Activated T-helper 2 cell treated with anti-CD3 and anti-CD28 coated beads, Interferon-gamma antibody, Interleukin-2, Interleukin-4, amounts not matched to agents 10 μg/mL and 5 μg/mL and 100 μg/mL, durations not matched to agents 14 hours and 24 hours and 36 hours (primary cell): ENCODE measurements at regions of chr9 and their contacts with region 1.

Region 1: GRCh38 chr9:112218908-112219307 is 43.8 kb upstream of the SUSD1 start:
- DNase-seq: peak; percentile 13
- H3K4me3 Mint-ChIP-seq: no peak overlapping the region
- H3K27ac Mint-ChIP-seq: peak overlapping the region; percentile 80
- H3K4me1 Mint-ChIP-seq: peaks cover 35% of the 10 kb centered on the region
- H3K27me3 Mint-ChIP-seq: no peaks in the 10 kb centered on the region

Region 2: DNA sequence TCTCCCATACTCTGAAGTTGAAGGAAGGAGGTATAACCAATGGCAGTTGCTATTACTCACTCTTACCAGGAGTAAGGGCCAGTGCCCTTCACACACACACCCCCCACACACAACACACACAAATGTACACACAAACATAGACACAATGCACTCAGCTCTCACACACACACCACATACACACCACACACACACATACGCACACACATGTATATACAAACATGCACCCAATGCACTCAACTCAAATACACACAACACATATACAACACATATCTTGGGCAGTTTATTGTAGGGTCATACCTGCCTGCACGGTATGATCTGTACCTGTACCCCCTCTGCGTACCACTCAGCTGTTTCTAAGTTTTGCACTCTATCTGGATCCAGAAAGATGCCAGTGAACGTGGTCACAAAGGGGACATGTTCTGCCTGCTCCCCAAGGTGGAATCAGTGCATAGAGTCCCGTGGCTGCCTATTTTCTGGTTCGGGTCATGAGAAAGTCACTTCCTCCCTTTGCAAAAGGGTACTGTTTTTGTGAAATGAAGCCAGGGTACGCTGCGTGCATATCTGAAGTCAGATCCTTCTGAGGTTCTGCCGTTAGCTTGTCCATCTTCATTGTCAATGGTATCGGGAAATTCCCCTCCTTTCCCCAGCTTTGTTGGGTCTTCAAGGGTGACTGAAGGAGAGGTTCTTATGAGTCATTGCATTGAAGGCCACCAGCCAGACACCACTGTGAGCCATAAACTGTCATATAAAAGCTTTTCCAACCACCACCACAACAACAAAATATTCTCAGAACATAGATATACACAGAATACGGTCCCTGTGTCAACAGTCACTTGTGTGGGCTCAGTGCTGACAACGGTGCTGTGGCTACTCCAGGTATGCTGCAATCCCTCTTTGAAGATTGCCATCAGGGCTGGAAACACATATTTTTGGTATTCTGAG is 190.4 kb before region 1 on chr9:
- intact Hi-C with region 1: loop called (anchors 5 kb)
- DNase-seq: no peak
- H3K4me3 Mint-ChIP-seq: no peak overlapping the region
- H3K27ac Mint-ChIP-seq: no peak overlapping the region
- H3K4me1 Mint-ChIP-seq: peaks cover 29% of the 10 kb centered on the region
- H3K27me3 Mint-ChIP-seq: peaks cover 7% of the 10 kb centered on the region

Region 3: GRCh38 chr9:112097712-112098688 is 120.9 kb before region 1 on chr9:
- intact Hi-C with region 1: loop called (anchors 1 kb)
- DNase-seq: peak; percentile 59
- H3K4me3 Mint-ChIP-seq: no peak overlapping the region
- H3K27ac Mint-ChIP-seq: no peak overlapping the region
- H3K4me1 Mint-ChIP-seq: peaks cover 27% of the 10 kb centered on the region
- H3K27me3 Mint-ChIP-seq: no peaks in the 10 kb centered on the region

Region 4: GRCh38 chr9:112180387-112180881 is 38.5 kb before region 1 on chr9:
- intact Hi-C with region 1: loop called (anchors 2 kb)
- DNase-seq: peak; percentile 55
- H3K4me3 Mint-ChIP-seq: peak overlapping the region; percentile 11
- H3K27ac Mint-ChIP-seq: peak overlapping the region; percentile 61
- H3K4me1 Mint-ChIP-seq: peaks cover 50% of the 10 kb centered on the region
- H3K27me3 Mint-ChIP-seq: peaks cover 2% of the 10 kb centered on the region

Region 5: GRCh38 chr9:112249277-112249676 is 30.4 kb after region 1 on chr9:
- intact Hi-C with region 1: loop called (anchors 2 kb)
- DNase-seq: no peak
- H3K4me3 Mint-ChIP-seq: no peak overlapping the region
- H3K27ac Mint-ChIP-seq: peak overlapping the region; percentile 34
- H3K4me1 Mint-ChIP-seq: peaks cover 26% of the 10 kb centered on the region
- H3K27me3 Mint-ChIP-seq: no peaks in the 10 kb centered on the region

Region 6: GRCh38 chr9:112315331-112316257 is 96.7 kb after region 1 on chr9:
- intact Hi-C with region 1: loop called (anchors 5 kb)
- DNase-seq: no peak
- H3K4me3 Mint-ChIP-seq: peak overlapping the region; percentile 23
- H3K27ac Mint-ChIP-seq: peak overlapping the region; percentile 81
- H3K4me1 Mint-ChIP-seq: peaks cover 51% of the 10 kb centered on the region
- H3K27me3 Mint-ChIP-seq: no peaks in the 10 kb centered on the region